ENCODE measurements at regions of chr4 and their contacts with region 1.

Region 1: GRCh38 chr4:143346206-143346605 is 9.5 kb downstream of the GAB1 start:
- DNase-seq: no peak
- H3K4me3 ChIP-seq: no peak overlapping the region
- H3K27ac ChIP-seq: no peak overlapping the region
- H3K4me1 ChIP-seq: peaks cover 49% of the 10 kb centered on the region
- H3K27me3 ChIP-seq: no peaks in the 10 kb centered on the region
- CTCF ChIP-seq: no peak

Region 2: DNA sequence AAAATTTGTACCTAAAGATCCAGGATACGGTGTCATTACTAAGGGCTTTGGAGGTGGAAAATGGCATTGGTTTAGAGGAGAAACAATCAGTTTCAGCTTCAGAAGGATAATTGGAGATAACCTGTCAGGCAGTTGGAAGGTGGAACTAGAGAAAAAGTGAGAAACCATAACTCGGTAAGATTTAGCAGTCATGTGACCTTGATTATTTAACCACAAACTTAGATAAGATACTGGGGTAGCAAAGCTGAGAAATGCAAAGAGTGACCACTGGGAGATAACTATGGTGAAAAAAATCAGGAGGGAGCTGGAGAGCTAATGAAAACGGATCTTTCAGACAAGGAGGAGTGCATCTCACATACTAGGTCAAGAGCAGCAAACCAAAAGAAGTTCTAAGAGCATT is 109.0 kb after region 1 on chr4:
- intact Hi-C with region 1: loop called (anchors 10 kb)
- DNase-seq: no peak
- H3K4me3 ChIP-seq: no peak overlapping the region
- H3K27ac ChIP-seq: peak overlapping the region; percentile 37
- H3K4me1 ChIP-seq: peaks cover 27% of the 10 kb centered on the region
- H3K27me3 ChIP-seq: no peaks in the 10 kb centered on the region
- CTCF ChIP-seq: no peak

Region 3: DNA sequence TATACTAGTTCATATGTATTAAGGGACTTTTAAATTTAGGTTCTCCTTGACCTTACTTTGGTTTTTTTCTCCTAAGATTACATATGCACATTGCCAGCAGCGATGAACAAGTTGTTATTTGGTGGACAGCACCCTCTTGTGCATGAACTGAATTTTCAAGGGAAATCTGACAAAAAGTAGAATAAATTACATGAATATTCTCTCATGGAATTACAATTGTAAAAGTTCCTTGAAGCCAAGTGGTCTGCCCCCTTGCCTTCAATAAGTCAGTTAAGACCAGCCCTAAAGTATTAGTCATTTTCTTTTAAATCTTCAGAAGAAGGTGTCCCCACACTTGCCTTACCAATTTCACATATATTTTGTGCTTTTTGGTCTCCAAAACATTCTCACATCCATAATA is 136.6 kb after region 1 on chr4:
- intact Hi-C with region 1: no loop called
- DNase-seq: no peak
- H3K4me3 ChIP-seq: no peak overlapping the region
- H3K27ac ChIP-seq: no peak overlapping the region
- H3K4me1 ChIP-seq: peaks cover 4% of the 10 kb centered on the region
- H3K27me3 ChIP-seq: no peaks in the 10 kb centered on the region
- CTCF ChIP-seq: peak; percentile 77